GM18951 (cell line): ENCODE measurements at regions of chr2 and their contacts with region 1.

Region 1: GRCh38 chr2:84939426-84940087 is 31.4 kb upstream of the KCMF1 start:
- POLR2A ChIP-seq: peak; percentile 49

Region 2: DNA sequence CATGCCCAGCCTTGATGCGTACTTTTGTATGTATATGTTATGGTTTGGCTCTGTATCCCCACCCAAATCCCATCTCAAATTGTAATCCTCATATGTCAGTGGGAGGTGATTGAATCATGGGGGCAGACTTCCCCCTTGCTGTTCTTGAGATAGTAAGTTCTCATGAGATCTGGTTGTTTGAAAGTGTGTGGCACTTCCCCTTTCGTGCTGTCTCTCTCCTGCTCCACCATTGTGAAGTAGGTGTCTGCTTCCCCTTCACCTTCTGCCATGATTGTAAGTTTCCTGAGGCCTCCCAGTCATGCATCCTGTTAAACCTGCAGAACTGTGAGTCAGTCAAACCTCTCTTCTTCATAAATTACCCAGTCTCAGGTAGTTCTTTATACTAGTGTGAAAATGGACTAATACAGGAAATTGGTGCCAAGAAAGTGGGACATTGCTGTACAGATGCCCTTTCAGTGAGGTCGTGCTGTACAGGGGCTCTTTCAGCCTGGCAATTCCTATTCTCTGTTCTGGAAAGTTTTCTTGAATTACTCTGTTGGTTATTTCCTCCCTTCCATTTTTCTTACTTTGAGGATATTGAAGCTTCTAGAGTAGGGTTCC is 69.6 kb after region 1 on chr2:
- in situ Hi-C with region 1: loop called (anchors 10 kb)
- POLR2A ChIP-seq: no peak

Region 3: GRCh38 chr2:85019121-85019520 is 79.6 kb after region 1 on chr2:
- in situ Hi-C with region 1: no loop called
- POLR2A ChIP-seq: no peak